H1 (cell line): ENCODE measurements at regions of chr6 and their contacts with region 1.

Region 1: DNA sequence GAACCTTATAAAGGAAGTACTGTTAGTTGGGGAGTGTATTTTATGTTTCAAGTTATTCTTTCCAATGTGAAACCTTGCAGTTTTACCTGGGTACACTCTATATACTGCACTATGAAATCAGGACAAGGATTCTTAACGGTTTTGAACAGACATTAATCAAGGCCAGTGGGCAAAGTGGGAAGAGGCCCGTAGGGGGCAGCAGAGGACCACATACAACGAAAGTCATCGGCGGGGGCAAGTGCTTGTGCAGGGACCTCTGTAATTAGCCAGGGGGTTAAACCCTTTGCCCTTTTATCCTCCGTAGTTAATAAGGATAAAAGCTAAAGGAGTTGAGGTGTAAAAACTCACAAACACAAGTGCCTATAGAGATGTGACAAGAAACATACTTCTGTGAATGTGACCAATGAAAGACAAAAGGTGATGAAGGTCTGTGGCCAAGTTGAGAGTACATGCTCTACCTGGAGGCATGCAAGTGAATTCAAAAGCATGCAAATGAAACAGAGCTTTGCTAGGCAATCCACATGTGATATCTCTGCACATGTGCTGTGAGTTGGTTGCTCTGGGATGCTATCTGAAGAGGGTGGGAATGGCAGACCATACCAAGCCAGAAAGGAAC is 392.7 kb upstream of the MAN1A1 start:
- DNase-seq: peak in 1 of 2 experiments; percentile 91
- H3K4me3 ChIP-seq: no peak overlapping the region
- H3K27ac ChIP-seq: no peak overlapping the region
- H3K4me1 ChIP-seq: no peaks in the 10 kb centered on the region
- H3K27me3 ChIP-seq: no peaks in the 10 kb centered on the region
- CTCF ChIP-seq: peak; percentile 74 to 84 (median 78)
- EP300 ChIP-seq: no peak
- POLR2A ChIP-seq: no peak
- RAD21 ChIP-seq: peak; percentile 95 to 97

Region 2: DNA sequence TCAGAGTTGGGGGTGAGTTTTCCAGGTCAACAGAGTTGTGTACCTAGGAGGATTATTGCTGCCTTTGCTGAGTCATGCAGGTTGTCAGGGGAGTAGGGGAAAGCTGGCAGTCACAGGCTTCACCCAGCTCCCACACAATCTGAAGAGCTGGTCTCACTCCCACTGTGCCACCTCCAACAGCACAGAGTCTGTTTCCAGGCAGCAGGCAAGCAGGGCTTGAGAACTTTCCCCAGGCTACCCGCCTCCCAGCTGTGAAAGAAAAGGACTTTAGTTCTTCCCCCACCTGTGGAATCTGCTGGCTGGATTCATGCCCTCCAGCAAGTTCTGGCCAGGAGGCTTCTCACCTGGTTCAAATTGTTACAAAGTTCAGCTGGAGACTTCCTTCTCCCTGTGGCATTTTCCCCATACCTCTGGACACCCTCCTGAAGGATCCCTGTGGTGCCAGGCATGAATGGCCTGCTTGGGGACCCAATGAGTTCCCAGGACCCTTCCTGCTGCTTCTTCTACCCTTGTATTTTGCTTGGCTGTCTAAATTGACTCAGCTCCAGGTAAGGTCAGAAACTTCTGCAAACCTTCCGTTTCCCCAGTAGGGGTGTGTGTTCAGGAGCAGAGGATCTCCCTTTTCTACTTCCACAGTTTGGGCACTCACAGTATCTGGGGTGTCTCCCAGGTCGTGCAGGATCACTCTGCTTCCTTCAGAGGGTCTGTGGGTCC is 14.6 kb before region 1 on chr6:
- CTCF ChIA-PET with region 1: interaction called, 13 read pairs
- POLR2A ChIA-PET with region 1: no interaction called
- DNase-seq: no peak
- H3K4me3 ChIP-seq: no peak overlapping the region
- H3K27ac ChIP-seq: no peak overlapping the region
- H3K4me1 ChIP-seq: peaks cover 0 to 7% (median 5%) of the 10 kb centered on the region in 4 experiments; a peak in 5 of 7 replicates
- H3K27me3 ChIP-seq: no peaks in the 10 kb centered on the region
- CTCF ChIP-seq: peak in 1 of 3 experiments; percentile 24; a peak in 1 of 4 replicates
- EP300 ChIP-seq: no peak
- POLR2A ChIP-seq: no peak
- RAD21 ChIP-seq: peak; percentile 12 to 14; a peak in 2 of 4 replicates

Region 3: GRCh38 chr6:119791746-119792145 is 49.5 kb after region 1 on chr6:
- CTCF ChIA-PET with region 1: no interaction called
- POLR2A ChIA-PET with region 1: no interaction called
- DNase-seq: no peak
- H3K4me3 ChIP-seq: no peak overlapping the region
- H3K27ac ChIP-seq: no peak overlapping the region
- H3K4me1 ChIP-seq: peaks cover 0 to 2% (median 0%) of the 10 kb centered on the region in 4 experiments; a peak in 1 of 7 replicates
- H3K27me3 ChIP-seq: no peaks in the 10 kb centered on the region
- CTCF ChIP-seq: no peak
- EP300 ChIP-seq: no peak
- POLR2A ChIP-seq: no peak
- RAD21 ChIP-seq: no peak

Region 4: GRCh38 chr6:119966486-119966885 is 224.2 kb after region 1 on chr6:
- CTCF ChIA-PET with region 1: interaction called, 11 read pairs
- POLR2A ChIA-PET with region 1: no interaction called
- DNase-seq: peak; percentile 44 to 83
- H3K4me3 ChIP-seq: no peak overlapping the region
- H3K27ac ChIP-seq: no peak overlapping the region
- H3K4me1 ChIP-seq: no peaks in the 10 kb centered on the region
- H3K27me3 ChIP-seq: no peaks in the 10 kb centered on the region
- CTCF ChIP-seq: peak; percentile 68 to 80 (median 70)
- EP300 ChIP-seq: no peak
- POLR2A ChIP-seq: no peak
- RAD21 ChIP-seq: peak; percentile 68 to 74

Region 5: GRCh38 chr6:120260636-120261035 is 518.3 kb after region 1 on chr6:
- CTCF ChIA-PET with region 1: no interaction called
- POLR2A ChIA-PET with region 1: no interaction called
- DNase-seq: no peak
- H3K4me3 ChIP-seq: no peak overlapping the region
- H3K27ac ChIP-seq: no peak overlapping the region
- H3K4me1 ChIP-seq: no peaks in the 10 kb centered on the region
- H3K27me3 ChIP-seq: no peaks in the 10 kb centered on the region
- CTCF ChIP-seq: no peak
- EP300 ChIP-seq: no peak
- POLR2A ChIP-seq: no peak
- RAD21 ChIP-seq: no peak